Posterior vena cava (tissue), 2 donors: ENCODE measurements at regions of chr6 and their contacts with region 1.

Region 1: GRCh38 chr6:35161776-35162607 is 20.9 kb upstream of the TCP11 start:
- DNase-seq: no peak

Region 2: DNA sequence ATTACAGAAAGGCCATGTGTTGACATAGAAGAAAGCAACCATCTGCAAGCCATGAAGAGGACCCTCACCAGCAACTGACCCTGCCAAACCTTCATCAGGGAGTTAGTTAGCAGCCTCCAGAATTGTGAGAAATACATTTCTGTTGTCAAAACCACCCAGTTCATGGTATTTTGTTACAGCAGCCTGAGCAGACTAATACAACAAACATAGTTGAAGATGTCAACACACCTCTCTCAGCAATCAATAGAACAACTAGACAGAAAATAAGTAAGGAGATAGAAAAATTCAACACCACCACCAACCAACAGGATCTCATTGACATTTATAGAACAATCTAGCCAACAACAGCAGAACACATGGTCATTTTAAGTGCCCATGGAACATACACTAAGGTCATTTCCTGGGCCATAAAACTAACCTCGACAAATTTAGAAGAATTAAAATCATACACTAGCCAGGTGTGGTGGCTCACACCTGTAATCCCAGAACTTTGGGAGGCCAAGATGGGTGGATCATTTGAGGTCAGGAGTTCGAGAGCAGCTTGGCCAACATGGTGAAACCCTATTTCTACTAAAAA is 53.6 kb before region 1 on chr6:
- intact Hi-C with region 1: no loop called
- DNase-seq: no peak

Region 3: DNA sequence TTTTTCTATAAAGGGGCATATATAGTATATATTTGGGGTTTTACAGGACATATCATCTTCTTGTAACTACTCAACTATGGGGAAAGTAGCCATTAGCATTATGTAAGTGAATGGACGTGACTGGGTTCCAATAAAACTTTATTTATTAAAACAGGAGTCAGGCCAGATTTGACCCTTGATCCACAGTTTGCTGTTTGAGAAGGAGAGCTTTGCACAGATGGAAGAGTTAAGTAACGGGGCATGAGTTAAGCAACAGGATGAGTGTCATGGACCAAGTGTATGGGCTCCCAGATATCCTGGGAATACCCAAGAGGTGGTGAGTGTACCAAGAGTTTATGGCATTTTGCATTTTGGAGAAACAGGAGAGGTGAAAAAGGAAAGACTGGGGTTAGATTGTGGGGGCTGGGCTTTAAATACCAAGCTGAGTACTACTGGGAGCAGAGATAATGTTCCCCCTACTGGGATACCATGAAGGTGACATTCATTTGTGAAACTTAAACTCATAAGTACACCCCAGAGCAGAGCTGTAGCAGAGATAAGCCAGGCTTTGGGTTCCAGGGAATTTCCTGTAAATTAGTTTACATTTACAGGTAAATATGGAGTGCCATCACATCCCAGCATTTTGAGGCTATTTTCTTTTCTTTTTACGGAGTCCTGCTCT is 33.3 kb after region 1 on chr6:
- intact Hi-C with region 1: loop called in 1 of 2 experiments (anchors 5 kb)
- DNase-seq: no peak

Region 4: DNA sequence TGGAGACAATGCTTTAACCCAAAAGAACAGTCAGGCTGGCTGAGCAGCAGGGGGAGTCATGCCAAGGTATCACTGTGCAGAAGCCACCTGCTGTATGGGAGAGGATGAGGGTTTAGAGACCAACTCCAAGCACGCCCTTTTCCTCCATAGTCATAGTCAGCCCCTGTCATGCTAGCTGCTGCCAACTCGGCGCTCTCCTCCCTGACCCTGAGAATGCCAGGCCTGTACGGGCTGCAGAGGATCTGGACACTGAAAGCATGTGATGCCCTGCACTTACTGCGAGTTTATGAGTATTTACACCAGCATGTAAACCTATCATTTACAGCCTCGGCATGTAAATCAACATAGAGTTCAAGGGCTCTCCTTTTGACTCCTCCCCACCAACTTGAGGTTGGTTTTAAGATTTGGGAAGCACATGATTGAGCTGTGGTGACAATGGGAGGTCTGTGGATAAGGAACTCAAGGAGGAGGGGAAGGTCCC is 40.1 kb after region 1 on chr6:
- intact Hi-C with region 1: loop called (anchors 1 to 5 kb)
- DNase-seq: no peak

Region 5: DNA sequence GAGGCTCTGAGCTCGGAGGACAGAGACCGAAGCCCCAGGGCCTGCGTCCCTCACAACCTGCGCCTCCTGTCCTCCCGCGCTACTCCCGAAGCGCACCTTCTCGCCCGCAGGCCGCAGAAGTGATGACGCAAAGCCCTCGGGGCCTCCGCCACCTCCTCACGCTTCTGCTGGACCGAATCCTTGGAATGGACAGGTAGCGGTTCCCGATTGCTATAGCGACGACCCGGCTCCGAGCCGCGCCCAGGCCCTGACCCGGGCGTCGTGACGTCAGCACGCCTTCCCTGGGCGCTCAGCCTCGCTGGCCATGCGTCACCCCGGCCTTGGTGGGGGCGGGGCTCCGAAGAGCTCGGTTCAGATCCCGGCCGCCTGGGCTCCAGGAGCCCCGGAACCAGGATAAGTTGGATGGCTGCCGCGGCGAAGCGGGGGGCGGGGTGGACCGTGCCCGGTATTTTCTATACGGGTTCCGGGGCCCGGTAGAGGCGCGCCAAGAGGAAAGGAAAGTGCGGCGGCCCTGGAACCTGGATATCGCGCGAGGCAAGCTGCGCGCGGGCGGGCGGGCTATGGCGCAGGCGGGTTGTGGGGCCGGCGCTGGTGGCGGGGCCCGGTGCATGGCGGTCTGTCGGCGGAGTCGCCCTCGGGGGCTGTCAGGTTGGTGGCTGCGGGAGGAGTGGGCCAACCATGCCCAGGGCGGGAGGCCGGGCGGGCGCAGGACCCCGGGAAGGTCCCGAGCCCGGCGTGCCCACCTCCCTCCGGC is 97.4 kb after region 1 on chr6 and contains the start of gene ZNF76:
- intact Hi-C with region 1: no loop called
- DNase-seq: peak; percentile 99
- total RNA-seq, gene ZNF76: 23.1 to 29.6 TPM

Region 6: GRCh38 chr6:37018198-37019064 is 1856.4 kb after region 1 on chr6:
- intact Hi-C with region 1: no loop called
- DNase-seq: peak; percentile 96